Activated CD4-positive, alpha-beta T cell treated with anti-CD3 and anti-CD28 coated beads, Interleukin-2, amount 10 ng/mL, durations not matched to agents 24 days and 14 days (primary cell): ENCODE measurements at regions of chr17 and their contacts with region 1.

Region 1: GRCh38 chr17:81683584-81684237 is at the starts of genes ARL16 and HGS:
- DNase-seq: peak; percentile 99
- H3K4me3 Mint-ChIP-seq: peak within 1 kb of the TSS; percentile 97
- H3K27ac Mint-ChIP-seq: peak within 1 kb of the TSS; percentile 96
- H3K4me1 Mint-ChIP-seq: peaks cover 22% of the 10 kb centered on the region
- H3K27me3 Mint-ChIP-seq: peaks cover 2% of the 10 kb centered on the region
- total RNA-seq, gene ARL16: 34.9 and 37.6 TPM in 2 replicates
- total RNA-seq, gene HGS: 136 and 137 TPM in 2 replicates

Region 2: DNA sequence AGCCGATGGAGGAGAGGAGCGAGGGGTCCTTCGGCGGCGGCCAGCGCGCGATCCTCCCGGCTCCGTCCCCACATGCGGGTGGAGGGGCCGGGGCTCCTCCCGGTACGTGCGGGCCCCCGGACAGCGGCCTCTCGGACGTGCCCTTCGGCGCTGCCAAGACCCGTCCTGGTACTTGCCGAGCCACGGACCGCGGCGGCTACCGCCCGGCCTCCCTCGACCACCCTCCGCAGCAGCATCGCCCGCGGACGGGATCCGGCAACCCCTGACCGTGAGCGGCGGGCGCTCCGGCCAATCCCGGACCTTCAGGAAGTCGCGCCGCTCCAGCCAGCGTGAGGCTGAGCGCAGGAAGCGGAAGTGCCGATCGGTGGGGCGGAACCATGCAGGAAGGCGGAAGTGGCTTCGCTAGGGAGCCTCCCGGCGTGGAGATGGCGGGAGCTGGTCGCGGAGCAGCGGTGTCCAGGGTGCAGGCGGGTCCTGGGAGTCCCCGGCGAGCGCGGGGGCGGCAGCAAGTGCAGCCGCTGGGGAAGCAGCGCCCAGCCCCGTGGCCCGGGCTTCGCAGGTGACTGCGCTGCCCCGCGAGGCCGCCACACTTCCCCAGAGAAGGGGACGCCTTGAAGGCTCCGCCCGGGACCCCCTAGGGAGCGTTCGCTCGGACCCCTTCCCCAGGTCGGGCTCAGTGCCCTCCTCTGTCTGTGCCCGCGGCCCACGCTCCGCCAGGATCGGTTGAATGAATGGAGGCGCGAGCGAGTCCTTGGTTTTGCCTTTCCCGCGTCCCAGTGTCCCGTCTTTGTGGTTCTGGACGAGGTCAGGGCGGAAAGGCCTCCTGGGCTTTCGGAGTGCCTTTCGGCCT is 17.1 kb before region 1 on chr17 and contains the starts of genes CCDC137 and OXLD1:
- intact Hi-C with region 1: loop called (anchors 1 kb)
- DNase-seq: peak; percentile 98
- H3K4me3 Mint-ChIP-seq: peak within 1 kb of the TSS; percentile 93
- H3K27ac Mint-ChIP-seq: peak within 1 kb of the TSS; percentile 97
- H3K4me1 Mint-ChIP-seq: peaks cover 33% of the 10 kb centered on the region
- H3K27me3 Mint-ChIP-seq: no peaks in the 10 kb centered on the region
- total RNA-seq, gene CCDC137: 54.7 and 60.2 TPM in 2 replicates
- total RNA-seq, gene OXLD1: 52.8 and 57.8 TPM in 2 replicates

Region 3: DNA sequence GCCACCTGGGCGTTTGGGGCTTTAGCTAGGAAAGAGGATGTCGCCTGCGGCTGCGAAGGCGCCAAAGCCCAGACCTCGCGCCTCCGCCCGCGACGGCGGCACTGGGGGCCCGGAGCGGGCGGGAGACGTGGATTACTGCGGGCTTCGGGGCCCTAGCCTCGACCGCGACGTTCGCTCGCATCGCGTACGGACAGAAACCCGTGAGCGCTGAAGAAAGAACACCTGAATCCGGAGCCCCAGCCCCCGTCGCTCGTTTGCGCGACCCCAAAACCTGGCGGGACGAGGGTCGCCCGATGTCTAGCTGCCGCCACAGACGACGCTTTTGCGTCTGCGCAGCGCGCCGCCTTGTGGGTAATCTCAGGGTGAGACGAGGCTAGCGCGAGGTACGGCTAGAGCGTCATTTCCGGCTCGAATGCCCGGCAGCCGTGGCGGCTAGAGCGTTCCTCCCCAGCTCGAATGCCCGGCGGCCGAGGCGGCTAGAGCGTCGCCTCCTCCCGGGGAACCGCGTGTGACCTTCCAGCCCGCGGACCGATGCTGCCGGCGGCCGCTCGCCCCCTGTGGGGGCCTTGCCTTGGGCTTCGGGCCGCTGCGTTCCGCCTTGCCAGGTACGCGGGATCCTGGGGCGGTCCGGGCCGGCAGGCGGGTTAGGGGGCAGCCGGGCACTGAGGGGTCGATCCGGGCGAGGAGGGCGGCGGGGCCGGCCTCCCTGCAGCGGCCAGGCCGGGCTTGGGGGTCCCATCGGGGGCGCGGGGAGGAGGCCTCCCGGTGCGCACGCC is 19.4 kb after region 1 on chr17 and contains the start of gene MRPL12:
- intact Hi-C with region 1: loop called (anchors 1 kb)
- DNase-seq: peak; percentile 97
- H3K4me3 Mint-ChIP-seq: peak within 1 kb of the TSS; percentile 97
- H3K27ac Mint-ChIP-seq: peak within 1 kb of the TSS; percentile 98
- H3K4me1 Mint-ChIP-seq: peaks cover 19% of the 10 kb centered on the region
- H3K27me3 Mint-ChIP-seq: no peaks in the 10 kb centered on the region
- total RNA-seq, gene MRPL12: 232 and 233 TPM in 2 replicates

Region 4: DNA sequence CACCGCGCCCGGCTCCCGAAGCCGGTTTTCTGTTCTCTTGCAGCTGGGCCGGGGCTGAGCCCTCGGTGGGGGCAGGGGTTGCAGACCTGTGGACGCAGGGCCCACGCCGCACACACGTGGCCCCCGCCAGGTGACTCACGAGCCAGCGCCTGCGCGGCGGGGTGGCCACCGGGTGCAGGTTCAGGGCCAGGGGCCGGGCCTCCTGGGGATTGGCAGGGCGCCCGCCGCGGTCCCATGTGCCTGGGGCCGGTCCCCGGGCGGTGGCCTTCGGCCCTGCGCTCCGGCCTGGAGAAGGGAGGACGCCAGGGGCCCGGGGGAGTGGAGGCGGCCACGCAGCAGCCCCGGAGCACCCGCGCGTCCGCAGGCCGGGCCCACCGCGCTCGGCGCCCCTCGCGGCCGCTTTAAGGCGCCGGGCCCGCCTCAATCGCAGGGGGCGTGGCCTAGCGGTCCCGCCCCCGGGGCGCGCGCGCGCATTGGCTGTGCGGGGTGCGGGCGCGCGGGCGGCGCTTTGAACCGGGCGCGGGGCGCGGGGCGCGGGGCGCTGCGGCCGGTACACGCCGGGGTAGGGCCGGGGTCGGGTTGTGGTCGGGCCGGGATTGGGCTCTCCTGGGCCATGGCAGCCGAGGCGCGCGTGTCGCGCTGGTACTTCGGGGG is 28.2 kb after region 1 on chr17 and contains the start of gene SLC25A10:
- intact Hi-C with region 1: loop called (anchors 2 kb)
- DNase-seq: peak; percentile 95
- H3K4me3 Mint-ChIP-seq: peak within 1 kb of the TSS; percentile 91
- H3K27ac Mint-ChIP-seq: peak within 1 kb of the TSS; percentile 89
- H3K4me1 Mint-ChIP-seq: peaks cover 14% of the 10 kb centered on the region
- H3K27me3 Mint-ChIP-seq: no peaks in the 10 kb centered on the region
- total RNA-seq, gene SLC25A10: 48.6 and 52.7 TPM in 2 replicates